Ascending aorta (tissue), 2 donors: ENCODE measurements at regions of chr4 and their contacts with region 1.

Region 1: GRCh38 chr4:123621072-123621705 is 224.6 kb downstream of the SPRY1 start:
- DNase-seq: peak in 1 of 2 donors; percentile 76
- H3K4me3 ChIP-seq: peak overlapping the region in 1 of 2 donors; percentile 6
- H3K27ac ChIP-seq: peak overlapping the region; percentile 83 to 86
- H3K4me1 ChIP-seq: peaks cover 0 to 9% of the 10 kb centered on the region in 2 donors
- H3K27me3 ChIP-seq: no peaks in the 10 kb centered on the region
- CTCF ChIP-seq: no peak

Region 2: DNA sequence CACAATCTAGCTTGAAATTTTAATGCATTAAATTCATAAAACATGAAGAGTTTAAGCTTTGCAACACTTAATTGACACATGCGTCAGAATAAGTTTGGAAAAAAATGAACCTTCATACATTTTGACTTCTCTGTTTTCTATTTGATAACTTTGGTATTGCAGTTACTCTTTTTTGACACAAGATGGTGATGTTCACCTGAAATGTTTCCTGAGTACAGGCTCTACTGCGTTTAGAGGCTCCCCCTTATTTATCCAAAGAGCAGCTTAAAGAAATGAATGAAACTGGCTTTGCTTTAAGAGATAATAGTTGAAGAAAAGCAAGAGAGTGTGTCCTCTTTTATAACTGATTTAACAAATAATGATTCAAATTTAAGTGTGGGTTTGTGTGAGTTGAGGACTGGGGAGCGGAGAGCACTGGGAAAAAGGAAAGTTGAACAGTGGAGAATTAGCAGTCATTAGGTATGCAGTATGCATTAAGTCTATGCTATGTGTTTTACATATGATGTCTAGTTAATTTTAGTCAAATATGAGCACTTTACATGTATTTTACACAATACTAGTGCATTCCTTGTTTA is 518.2 kb before region 1 on chr4:
- intact Hi-C with region 1: no loop called
- DNase-seq: no peak
- H3K4me3 ChIP-seq: no peak overlapping the region
- H3K27ac ChIP-seq: no peak overlapping the region
- H3K4me1 ChIP-seq: no peaks in the 10 kb centered on the region
- H3K27me3 ChIP-seq: no peaks in the 10 kb centered on the region
- CTCF ChIP-seq: peak; percentile 63 to 83 (median 63)

Region 3: DNA sequence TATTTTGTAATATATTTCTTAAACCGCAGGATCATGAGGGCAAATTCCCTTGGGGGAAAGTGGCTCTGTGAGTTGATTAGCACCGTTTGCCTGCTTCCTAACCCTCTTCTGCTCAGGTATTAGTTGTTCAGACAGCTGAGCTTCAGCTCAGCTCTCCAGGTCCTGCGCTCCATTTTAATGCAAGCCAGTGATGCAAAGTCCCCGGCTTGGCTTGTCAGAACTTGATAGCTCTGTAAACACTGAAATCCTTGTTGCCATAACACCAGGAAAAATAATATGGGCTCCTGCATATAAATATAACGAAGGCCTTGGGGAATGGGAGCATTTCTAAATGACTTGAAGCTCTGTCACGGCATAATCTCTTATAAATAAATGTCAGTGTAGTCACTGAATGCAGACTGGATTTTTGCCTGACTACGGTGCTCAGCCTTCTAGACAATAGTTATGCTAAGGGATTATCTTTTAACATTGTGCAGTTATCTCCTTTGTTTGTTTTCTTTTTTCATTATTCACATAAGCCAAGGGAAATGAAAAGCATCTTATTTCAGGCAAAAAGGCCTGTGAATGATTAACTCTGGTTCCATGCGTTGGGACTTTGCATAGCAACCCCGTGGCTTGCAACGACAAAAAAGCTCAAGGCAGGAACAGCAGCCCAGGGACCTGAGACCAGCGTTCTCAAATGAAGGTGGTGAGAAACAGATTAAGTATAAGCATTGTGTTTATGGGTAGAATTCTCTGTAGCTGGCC is 28.6 kb after region 1 on chr4:
- intact Hi-C with region 1: loop called (anchors 2 kb)
- DNase-seq: peak in 1 of 2 donors; percentile 70
- H3K4me3 ChIP-seq: peak overlapping the region; percentile 7 to 17
- H3K27ac ChIP-seq: peak overlapping the region; percentile 73 to 78
- H3K4me1 ChIP-seq: peaks cover 3 to 40% of the 10 kb centered on the region in 2 donors
- H3K27me3 ChIP-seq: no peaks in the 10 kb centered on the region
- CTCF ChIP-seq: no peak